Head of caudate nucleus (tissue), 42 donors: ENCODE measurements at regions of chr17 and their contacts with region 1.

Region 1: GRCh38 chr17:68972119-68972704 is 17.0 kb upstream of the ABCA8 start:
- DNase-seq: peak in 23 of 42 donors; percentile 12 to 79 (median 43)

Region 2: GRCh38 chr17:68704871-68705713 is 267.1 kb before region 1 on chr17:
- intact Hi-C with region 1: no loop called
- DNase-seq: peak in 34 of 42 donors; percentile 4 to 76 (median 32)

Region 3: DNA sequence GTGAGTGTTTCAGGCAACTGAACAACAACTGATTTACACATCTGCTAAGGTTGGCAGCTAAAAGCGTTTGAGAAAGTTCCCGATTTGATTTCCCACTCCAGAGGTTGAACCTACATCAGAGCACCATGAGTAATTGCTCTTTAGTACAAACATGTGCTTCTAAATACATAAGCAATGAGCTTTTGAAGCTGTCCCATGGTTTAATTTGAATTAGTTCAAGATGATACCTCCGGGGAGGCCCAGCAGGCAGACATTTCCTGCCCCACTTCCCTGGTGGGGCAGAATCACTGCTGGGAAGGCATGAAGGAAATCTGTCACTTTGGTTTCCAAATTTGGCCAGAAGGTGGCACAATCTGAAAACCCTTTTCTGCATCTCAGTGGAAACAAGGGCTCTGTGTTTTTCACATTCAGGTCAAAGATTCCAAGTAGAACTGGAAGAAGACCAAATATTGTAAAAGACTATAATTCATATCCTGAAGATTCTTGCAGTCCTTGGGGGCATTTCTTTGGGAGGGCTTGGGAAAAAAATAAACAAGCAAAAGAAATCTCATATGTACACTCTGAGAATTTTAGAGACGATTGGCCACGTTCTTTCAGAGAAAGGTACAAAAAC is 194.9 kb before region 1 on chr17:
- intact Hi-C with region 1: loop called (anchors 5 kb)
- DNase-seq: peak in 37 of 42 donors; percentile 21 to 91 (median 70)

Region 4: DNA sequence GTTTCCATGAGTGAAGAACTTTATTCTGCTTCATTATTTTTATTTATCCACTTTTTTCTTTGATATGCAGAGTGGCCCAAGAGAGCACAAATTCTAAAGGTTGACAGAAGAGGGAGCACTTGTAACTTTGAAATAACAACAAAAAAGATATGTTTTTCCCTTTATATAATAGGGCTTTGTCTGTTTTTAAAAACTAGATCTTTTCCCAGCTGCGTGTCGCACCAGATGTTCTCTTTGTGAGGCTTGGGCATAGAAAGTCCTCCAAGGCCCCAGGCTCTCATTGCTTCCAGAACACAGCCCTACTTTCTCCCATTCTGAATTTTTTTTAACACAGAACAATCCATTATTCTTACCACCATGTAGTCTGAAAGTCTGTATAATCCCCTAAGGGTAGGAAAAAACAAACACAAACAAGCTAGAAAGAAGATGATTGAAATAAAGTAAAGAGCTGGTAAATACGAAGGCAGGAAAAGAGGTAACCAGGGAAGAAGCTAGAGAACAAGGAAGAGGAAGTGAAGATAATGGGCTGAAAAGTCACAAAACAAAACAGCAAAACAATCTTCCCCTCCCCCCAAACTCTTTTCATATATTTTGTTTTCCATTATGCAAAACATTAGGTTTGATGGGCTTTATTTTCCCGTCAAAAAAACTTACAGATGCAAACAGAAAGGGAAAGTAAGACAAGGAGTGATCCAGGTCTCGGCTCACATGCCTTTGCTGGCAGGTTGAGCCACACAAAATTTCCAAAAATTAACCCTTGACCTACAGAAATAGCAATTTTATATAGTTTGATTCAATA is 177.4 kb before region 1 on chr17:
- intact Hi-C with region 1: loop called (anchors 5 kb)
- DNase-seq: peak; percentile 26 to 90 (median 75)

Region 5: DNA sequence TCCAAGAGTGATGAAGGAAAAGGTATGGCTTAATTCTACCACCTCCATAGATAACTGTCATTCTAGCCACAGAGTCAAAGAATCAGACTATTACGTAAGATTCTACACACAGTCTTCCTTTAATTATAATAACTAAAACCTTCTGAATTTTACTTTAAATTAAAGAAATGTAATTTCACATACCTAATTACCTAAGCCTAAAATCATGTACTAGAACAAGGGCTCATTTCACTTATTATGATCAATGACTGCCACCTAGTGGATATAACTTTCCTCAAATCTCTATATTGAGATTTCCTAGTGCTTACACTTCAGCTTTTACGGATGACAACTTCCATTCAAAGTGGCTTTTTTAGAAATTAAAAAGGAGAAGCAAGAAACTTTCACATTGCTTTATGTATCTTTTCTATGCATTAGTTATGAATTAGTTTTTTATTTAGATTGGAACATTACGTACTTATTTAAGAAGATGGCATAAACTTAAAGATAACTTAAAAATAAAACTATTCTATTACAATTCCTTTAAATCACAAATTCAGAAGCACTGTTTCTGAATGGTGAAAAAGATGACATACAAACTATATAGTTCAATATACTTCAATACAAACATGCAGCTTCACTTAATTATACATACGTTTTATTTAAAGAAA is 274.6 kb after region 1 on chr17:
- intact Hi-C with region 1: loop called (anchors 10 kb)
- DNase-seq: no peak